AG04450 (cell line): ENCODE measurements at regions of chr1 and their contacts with region 1.

Region 1: GRCh38 chr1:33472349-33472980 is at the start of gene ZSCAN20:
- DNase-seq: peak; percentile 95
- H3K4me3 ChIP-seq: peak within 1 kb of the TSS; percentile 86
- H3K27ac ChIP-seq: peak within 1 kb of the TSS; percentile 42
- H3K27me3 ChIP-seq: no peaks in the 10 kb centered on the region
- CTCF ChIP-seq: no peak
- polyA plus RNA-seq, gene ZSCAN20: 3.5 and 3.9 TPM in 2 replicates

Region 2: GRCh38 chr1:33367485-33368405 is 104.7 kb before region 1 on chr1:
- CTCF ChIA-PET with region 1: interaction called, 25 read pairs
- POLR2A ChIA-PET with region 1: no interaction called
- DNase-seq: no peak
- H3K4me3 ChIP-seq: no peak overlapping the region
- H3K27ac ChIP-seq: no peak overlapping the region
- H3K27me3 ChIP-seq: no peaks in the 10 kb centered on the region
- CTCF ChIP-seq: peak; percentile 97

Region 3: DNA sequence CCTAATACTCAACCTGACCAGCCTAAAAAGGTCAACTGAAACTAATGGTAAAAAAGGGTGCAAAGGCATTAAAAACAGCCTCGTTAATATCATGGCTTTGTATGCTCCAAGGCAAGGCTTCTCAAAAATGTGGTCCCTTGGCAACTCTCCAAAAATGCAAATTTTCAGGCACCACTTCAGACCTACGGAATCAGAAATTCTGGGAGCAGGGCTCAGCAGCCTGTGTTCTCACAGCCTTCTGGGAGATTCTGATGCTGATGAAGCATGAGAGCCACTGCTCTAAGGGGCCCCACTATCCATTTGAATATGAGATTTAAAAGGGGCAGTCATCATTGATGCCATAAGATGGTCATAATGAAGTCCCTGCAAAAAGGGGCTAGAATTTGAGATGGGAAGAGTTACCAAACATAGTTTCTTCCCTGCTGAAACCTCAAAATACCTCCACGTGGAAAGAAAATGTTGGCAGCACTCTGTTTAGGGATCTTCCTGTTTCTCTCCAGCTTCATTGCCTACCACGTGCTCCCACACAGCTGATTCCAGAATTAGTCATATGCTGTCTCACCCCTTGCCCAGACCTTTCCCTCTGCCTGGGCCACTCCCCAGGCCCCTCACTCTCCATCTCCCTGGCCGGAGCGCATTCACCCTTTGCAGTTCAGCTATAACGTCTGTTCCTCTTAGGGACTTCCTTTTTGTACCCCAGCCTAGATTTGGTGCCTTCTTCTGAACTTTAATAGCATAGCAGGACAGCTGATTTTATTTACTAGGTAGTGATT is 88.2 kb before region 1 on chr1:
- CTCF ChIA-PET with region 1: interaction called, 10 read pairs
- POLR2A ChIA-PET with region 1: no interaction called
- DNase-seq: no peak
- H3K4me3 ChIP-seq: no peak overlapping the region
- H3K27ac ChIP-seq: peak overlapping the region; percentile 67
- H3K27me3 ChIP-seq: no peaks in the 10 kb centered on the region
- CTCF ChIP-seq: no peak

Region 4: GRCh38 chr1:33455539-33456501 is 16.6 kb before region 1 on chr1:
- CTCF ChIA-PET with region 1: interaction called, 15 read pairs
- POLR2A ChIA-PET with region 1: interaction called, 4 read pairs
- DNase-seq: peak; percentile 72
- H3K4me3 ChIP-seq: no peak overlapping the region
- H3K27ac ChIP-seq: no peak overlapping the region
- H3K27me3 ChIP-seq: no peaks in the 10 kb centered on the region
- CTCF ChIP-seq: peak; percentile 82

Region 5: DNA sequence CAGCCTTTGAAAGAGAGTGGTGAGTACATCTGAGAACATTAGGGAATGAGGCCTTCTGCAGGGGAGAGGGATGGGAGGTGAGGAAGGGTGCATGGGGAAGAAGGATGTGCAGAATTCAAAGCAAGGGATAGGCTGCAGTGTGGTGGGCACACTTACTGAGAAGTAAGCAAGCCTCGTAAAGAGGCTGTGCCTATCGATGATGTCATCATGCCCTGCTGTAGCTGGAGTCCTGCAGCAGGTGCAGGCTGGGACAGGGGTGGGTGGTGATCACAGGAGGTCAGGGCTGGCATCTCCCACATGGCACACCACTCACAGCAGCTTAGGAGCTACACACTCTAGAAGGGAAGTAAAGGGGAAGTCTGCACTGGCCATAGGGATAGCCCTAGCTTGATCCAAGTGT is 16.2 kb after region 1 on chr1:
- CTCF ChIA-PET with region 1: no interaction called
- POLR2A ChIA-PET with region 1: no interaction called
- DNase-seq: no peak
- H3K4me3 ChIP-seq: no peak overlapping the region
- H3K27ac ChIP-seq: no peak overlapping the region
- H3K27me3 ChIP-seq: no peaks in the 10 kb centered on the region
- CTCF ChIP-seq: no peak

Region 6: GRCh38 chr1:33616773-33617172 is 144.3 kb after region 1 on chr1:
- CTCF ChIA-PET with region 1: interaction called, 16 read pairs
- POLR2A ChIA-PET with region 1: no interaction called
- DNase-seq: no peak
- H3K4me3 ChIP-seq: no peak overlapping the region
- H3K27ac ChIP-seq: no peak overlapping the region
- H3K27me3 ChIP-seq: no peaks in the 10 kb centered on the region
- CTCF ChIP-seq: no peak